ENCODE measurements at regions of chrX and their contacts with region 1.

Region 1: GRCh38 chrX:40169193-40170101 is 71.7 kb upstream of the BCOR start:
- DNase-seq: peak in 2 of 3 donors; percentile 53 to 60
- ATAC-seq: peak in 1 of 4 donors; percentile 8
- H3K4me3 ChIP-seq: no peak overlapping the region
- H3K27ac ChIP-seq: no peak overlapping the region
- H3K4me1 ChIP-seq: peaks cover 0 to 24% (median 7%) of the 10 kb centered on the region in 4 donors
- H3K27me3 ChIP-seq: no peaks in the 10 kb centered on the region
- CTCF ChIP-seq: peak in 2 of 4 donors; percentile 11 to 17
- POLR2A ChIP-seq: no peak

Region 2: GRCh38 chrX:40097497-40098263 is 71.8 kb before region 1 on chrX and contains the start of gene BCOR:
- intact Hi-C with region 1: loop called in 1 of 2 experiments (anchors 5 kb)
- DNase-seq: peak; percentile 85 to 87 (median 85)
- ATAC-seq: peak; percentile 48 to 64 (median 60)
- H3K4me3 ChIP-seq: peak within 1 kb of the TSS; percentile 65 to 74 (median 68)
- H3K27ac ChIP-seq: peak within 1 kb of the TSS; percentile 75 to 90 (median 87)
- H3K4me1 ChIP-seq: peaks cover 0 to 11% (median 0%) of the 10 kb centered on the region in 4 donors
- H3K27me3 ChIP-seq: peaks cover 0 to 4% of the 10 kb centered on the region in 2 donors
- CTCF ChIP-seq: no peak
- POLR2A ChIP-seq: peak; percentile 84
- total RNA-seq, gene BCOR: 9.4 to 16.6 (median 12.0) TPM

Region 3: GRCh38 chrX:40607381-40607780 is 437.9 kb after region 1 on chrX:
- intact Hi-C with region 1: no loop called
- DNase-seq: no peak
- ATAC-seq: no peak
- H3K4me3 ChIP-seq: no peak overlapping the region
- H3K27ac ChIP-seq: no peak overlapping the region
- H3K4me1 ChIP-seq: no peaks in the 10 kb centered on the region
- H3K27me3 ChIP-seq: no peaks in the 10 kb centered on the region
- CTCF ChIP-seq: no peak
- POLR2A ChIP-seq: no peak

Measured in right lobe of liver (tissue), 6 donors.